CD8-positive, alpha-beta T cell (primary cell): ENCODE measurements at regions of chr10 and their contacts with region 1.

Region 1: DNA sequence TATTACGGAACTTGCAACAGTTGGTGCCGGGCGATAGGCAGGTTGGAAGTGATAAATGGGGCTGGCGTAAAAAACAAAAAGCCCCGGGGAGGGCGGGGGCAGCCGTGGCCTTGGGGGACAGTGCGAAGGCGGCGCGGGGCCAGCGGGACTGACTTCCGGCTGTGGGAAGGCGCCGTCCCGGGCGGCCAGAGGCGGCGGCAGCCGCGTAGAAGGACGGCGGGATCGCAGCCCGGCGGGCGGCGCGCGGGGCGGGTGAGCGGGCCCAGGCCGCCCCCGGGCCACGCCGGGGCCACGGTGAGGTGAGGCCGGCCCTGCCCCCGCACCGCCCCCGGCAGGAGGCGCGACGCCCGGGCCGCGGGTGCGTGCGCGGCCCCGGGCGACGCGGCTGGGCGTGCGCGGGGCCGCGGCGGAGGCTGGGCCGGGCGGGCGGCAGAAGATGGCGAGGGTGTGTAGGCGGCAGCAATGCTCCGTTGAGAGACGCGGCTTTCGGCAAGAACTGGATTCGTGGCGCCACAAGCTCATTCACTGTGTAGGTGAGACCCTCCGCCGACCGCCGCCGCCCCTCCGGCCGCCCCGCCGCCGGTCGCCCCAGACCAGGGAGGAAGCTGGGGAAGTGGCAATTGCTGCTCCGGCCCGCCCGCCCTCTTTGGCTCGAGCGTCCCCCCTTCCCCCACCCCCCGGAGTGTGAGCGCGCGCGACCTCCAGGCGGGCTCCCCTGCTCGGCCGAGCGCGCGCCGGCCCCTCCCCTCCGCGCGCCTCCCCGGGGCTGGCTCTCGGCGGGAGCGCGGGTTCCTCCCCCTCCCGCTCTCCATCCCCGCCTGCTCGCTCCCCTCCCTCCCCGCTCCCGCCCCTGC is at the start of gene LCOR:
- DNase-seq: peak; percentile 66 to 94 (median 80)
- ATAC-seq: peak; percentile 69
- H3K4me3 ChIP-seq: peak within 1 kb of the TSS; percentile 72 to 76
- H3K4me3 Mint-ChIP-seq: peak within 1 kb of the TSS; percentile 89
- H3K27ac ChIP-seq: peak within 1 kb of the TSS; percentile 64 to 71
- H3K27ac Mint-ChIP-seq: peak within 1 kb of the TSS; percentile 97
- H3K4me1 ChIP-seq: peaks cover 25% of the 10 kb centered on the region
- H3K4me1 Mint-ChIP-seq: peaks cover 47% of the 10 kb centered on the region
- H3K27me3 ChIP-seq: no peaks in the 10 kb centered on the region
- H3K27me3 Mint-ChIP-seq: no peaks in the 10 kb centered on the region
- CTCF ChIP-seq: no peak
- total RNA-seq, gene LCOR: 57.9 to 62.0 TPM

Region 2: GRCh38 chr10:96586419-96587263 is 245.5 kb before region 1 on chr10 and contains the start of gene TM9SF3:
- CTCF ChIA-PET with region 1: no interaction called
- POLR2A ChIA-PET with region 1: interaction called, 4 read pairs
- intact Hi-C with region 1: loop called (anchors 1 kb)
- DNase-seq: peak; percentile 86 to 97 (median 94)
- ATAC-seq: peak; percentile 83
- H3K4me3 ChIP-seq: peak within 1 kb of the TSS; percentile 94
- H3K4me3 Mint-ChIP-seq: no peak within 1 kb of the TSS
- H3K27ac ChIP-seq: peak within 1 kb of the TSS; percentile 98 to 99
- H3K27ac Mint-ChIP-seq: peak within 1 kb of the TSS; percentile 86
- H3K4me1 ChIP-seq: peaks cover 51% of the 10 kb centered on the region
- H3K4me1 Mint-ChIP-seq: peaks cover 50% of the 10 kb centered on the region
- H3K27me3 ChIP-seq: no peaks in the 10 kb centered on the region
- H3K27me3 Mint-ChIP-seq: no peaks in the 10 kb centered on the region
- CTCF ChIP-seq: no peak
- total RNA-seq, gene TM9SF3: 105 to 106 TPM

Region 3: DNA sequence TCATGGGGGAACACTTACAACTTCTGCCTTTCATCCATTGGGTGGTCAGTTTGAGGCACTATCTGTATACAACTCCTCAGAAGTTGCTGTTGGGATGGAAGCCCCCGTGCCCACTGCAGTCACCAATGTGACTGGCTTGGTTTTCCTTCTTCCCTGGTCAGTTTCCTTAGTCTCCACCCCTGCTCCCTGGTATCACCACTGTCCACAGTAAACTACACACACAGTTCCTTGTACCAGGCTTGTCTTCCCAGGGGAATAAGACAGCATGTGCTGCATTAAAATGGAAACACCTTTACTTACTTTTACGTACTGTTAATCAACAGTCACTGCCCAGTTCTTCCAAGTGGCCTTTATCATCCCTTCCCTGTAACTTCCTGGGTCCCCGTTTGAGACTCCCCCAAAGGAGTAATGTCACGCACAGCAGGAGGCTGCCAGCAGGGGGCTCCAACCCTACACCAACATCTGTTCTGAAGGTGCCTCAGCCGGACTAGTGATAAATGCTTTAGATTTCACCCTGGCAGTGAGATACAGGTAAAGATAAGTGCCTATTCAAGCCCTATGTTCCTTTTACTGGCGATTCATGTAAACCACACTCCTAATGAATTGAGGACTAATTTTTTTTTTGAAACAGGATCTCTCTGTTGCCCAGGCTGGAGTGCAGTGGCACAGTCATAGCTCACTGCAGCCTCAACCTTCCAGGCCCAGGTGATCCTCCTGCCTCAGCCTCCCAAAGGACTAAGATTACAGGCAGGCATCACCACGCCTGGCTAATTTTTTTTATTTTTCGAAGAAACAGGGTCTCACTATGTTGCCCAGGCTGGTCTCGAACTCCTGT is 66.5 kb before region 1 on chr10:
- CTCF ChIA-PET with region 1: interaction called, 3 read pairs
- POLR2A ChIA-PET with region 1: no interaction called
- intact Hi-C with region 1: loop called (anchors 1 kb)
- DNase-seq: peak; percentile 53 to 83 (median 78)
- ATAC-seq: peak; percentile 94
- H3K4me3 ChIP-seq: no peak overlapping the region
- H3K4me3 Mint-ChIP-seq: no peak overlapping the region
- H3K27ac ChIP-seq: no peak overlapping the region
- H3K27ac Mint-ChIP-seq: no peak overlapping the region
- H3K4me1 ChIP-seq: no peaks in the 10 kb centered on the region
- H3K4me1 Mint-ChIP-seq: no peaks in the 10 kb centered on the region
- H3K27me3 ChIP-seq: no peaks in the 10 kb centered on the region
- H3K27me3 Mint-ChIP-seq: no peaks in the 10 kb centered on the region
- CTCF ChIP-seq: peak; percentile 78

Region 4: GRCh38 chr10:96878057-96878456 is 46.0 kb after region 1 on chr10:
- CTCF ChIA-PET with region 1: no interaction called
- POLR2A ChIA-PET with region 1: no interaction called
- intact Hi-C with region 1: no loop called
- DNase-seq: no peak
- ATAC-seq: no peak
- H3K4me3 ChIP-seq: no peak overlapping the region
- H3K4me3 Mint-ChIP-seq: no peak overlapping the region
- H3K27ac ChIP-seq: no peak overlapping the region
- H3K27ac Mint-ChIP-seq: no peak overlapping the region
- H3K4me1 ChIP-seq: peaks cover 6% of the 10 kb centered on the region
- H3K4me1 Mint-ChIP-seq: peaks cover 67% of the 10 kb centered on the region
- H3K27me3 ChIP-seq: no peaks in the 10 kb centered on the region
- H3K27me3 Mint-ChIP-seq: no peaks in the 10 kb centered on the region
- CTCF ChIP-seq: no peak

Region 5: GRCh38 chr10:97425964-97426775 is 594.1 kb after region 1 on chr10 and contains the start of gene PGAM1:
- CTCF ChIA-PET with region 1: no interaction called
- POLR2A ChIA-PET with region 1: no interaction called
- intact Hi-C with region 1: loop called in 1 of 2 experiments (anchors 5 kb)
- DNase-seq: peak; percentile 91 to 99 (median 93)
- ATAC-seq: peak; percentile 81
- H3K4me3 ChIP-seq: peak within 1 kb of the TSS; percentile 84
- H3K4me3 Mint-ChIP-seq: peak within 1 kb of the TSS; percentile 90
- H3K27ac ChIP-seq: peak within 1 kb of the TSS; percentile 85 to 86
- H3K27ac Mint-ChIP-seq: peak within 1 kb of the TSS; percentile 92
- H3K4me1 ChIP-seq: peaks cover 24% of the 10 kb centered on the region
- H3K4me1 Mint-ChIP-seq: peaks cover 44% of the 10 kb centered on the region
- H3K27me3 ChIP-seq: no peaks in the 10 kb centered on the region
- H3K27me3 Mint-ChIP-seq: no peaks in the 10 kb centered on the region
- CTCF ChIP-seq: peak; percentile 47
- total RNA-seq, gene PGAM1: 56.7 to 56.8 TPM

Region 6: GRCh38 chr10:97686962-97687784 is 855.1 kb after region 1 on chr10 and contains the start of gene AVPI1:
- CTCF ChIA-PET with region 1: no interaction called
- POLR2A ChIA-PET with region 1: no interaction called
- intact Hi-C with region 1: loop called in 1 of 2 experiments (anchors 5 kb)
- DNase-seq: peak; percentile 90 to 98 (median 96)
- ATAC-seq: peak; percentile 94
- H3K4me3 ChIP-seq: peak within 1 kb of the TSS; percentile 77 to 82
- H3K4me3 Mint-ChIP-seq: peak within 1 kb of the TSS; percentile 89
- H3K27ac ChIP-seq: peak within 1 kb of the TSS; percentile 47 to 64
- H3K27ac Mint-ChIP-seq: peak within 1 kb of the TSS; percentile 86
- H3K4me1 ChIP-seq: peaks cover 22% of the 10 kb centered on the region
- H3K4me1 Mint-ChIP-seq: peaks cover 23% of the 10 kb centered on the region
- H3K27me3 ChIP-seq: no peaks in the 10 kb centered on the region
- H3K27me3 Mint-ChIP-seq: peaks cover 4% of the 10 kb centered on the region
- CTCF ChIP-seq: no peak
- total RNA-seq, gene AVPI1: 13.7 TPM